HepG2 (cell line): ENCODE measurements at regions of chr10 and their contacts with region 1.

Region 1: DNA sequence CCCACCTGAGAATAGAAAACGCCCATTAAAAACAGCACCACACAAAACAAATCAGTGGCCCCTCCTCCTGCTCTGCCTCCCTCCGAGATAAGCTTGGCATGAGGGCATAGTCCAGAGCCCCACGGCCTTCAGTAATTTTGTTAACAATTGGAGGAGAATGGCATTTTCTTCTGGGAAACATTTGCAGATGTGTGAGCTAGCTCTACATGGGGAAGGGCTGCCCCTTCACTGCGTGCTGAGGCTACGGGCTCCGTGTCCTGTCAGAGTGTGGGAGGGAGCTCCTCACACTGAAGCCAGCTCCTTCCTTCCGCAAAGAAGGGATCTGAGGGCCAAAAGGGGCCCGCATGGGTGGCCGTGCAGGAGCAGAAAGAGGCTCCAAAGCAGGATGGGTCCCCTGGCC is 15.2 kb downstream of the GRK5 start:
- DNase-seq: peak; percentile 77
- ATAC-seq: peak; percentile 87
- H3K4me3 ChIP-seq: peak overlapping the region; percentile 40 to 69 (median 42); a peak in 5 of 6 replicates
- H3K27ac ChIP-seq: peak overlapping the region; percentile 60
- H3K4me1 ChIP-seq: peaks cover 50% of the 10 kb centered on the region
- H3K27me3 ChIP-seq: no peaks in the 10 kb centered on the region
- CTCF ChIP-seq: no peak
- EP300 ChIP-seq: no peak
- POLR2A ChIP-seq: no peak
- RAD21 ChIP-seq: no peak

Region 2: DNA sequence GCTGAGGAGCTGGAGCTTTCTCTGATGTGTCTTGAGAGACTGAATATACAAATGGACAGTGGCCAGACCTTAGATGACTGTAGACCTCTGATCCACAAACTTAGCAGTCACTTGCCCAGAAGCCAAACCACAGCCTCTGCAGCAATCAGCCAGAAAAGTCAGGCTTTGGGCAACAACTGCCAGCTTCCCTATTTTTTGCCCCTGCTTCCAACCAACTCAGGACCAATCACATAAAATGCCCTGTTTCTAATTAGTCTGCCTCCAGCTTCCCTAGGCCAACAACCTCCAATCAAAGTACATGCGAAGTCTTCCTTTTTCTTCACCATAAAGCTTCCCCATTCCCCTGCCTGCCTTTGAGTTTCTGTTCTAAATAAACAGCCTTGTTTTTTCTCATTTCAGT is 430.0 kb before region 1 on chr10:
- CTCF ChIA-PET with region 1: no interaction called
- POLR2A ChIA-PET with region 1: no interaction called
- in situ Hi-C with region 1: no loop called
- intact Hi-C with region 1: no loop called
- DNase-seq: no peak
- ATAC-seq: no peak
- H3K4me3 ChIP-seq: no peak overlapping the region
- H3K27ac ChIP-seq: no peak overlapping the region
- H3K4me1 ChIP-seq: no peaks in the 10 kb centered on the region
- H3K27me3 ChIP-seq: no peaks in the 10 kb centered on the region; a peak in 1 of 5 replicates
- CTCF ChIP-seq: no peak
- EP300 ChIP-seq: no peak
- POLR2A ChIP-seq: no peak
- RAD21 ChIP-seq: no peak

Region 3: DNA sequence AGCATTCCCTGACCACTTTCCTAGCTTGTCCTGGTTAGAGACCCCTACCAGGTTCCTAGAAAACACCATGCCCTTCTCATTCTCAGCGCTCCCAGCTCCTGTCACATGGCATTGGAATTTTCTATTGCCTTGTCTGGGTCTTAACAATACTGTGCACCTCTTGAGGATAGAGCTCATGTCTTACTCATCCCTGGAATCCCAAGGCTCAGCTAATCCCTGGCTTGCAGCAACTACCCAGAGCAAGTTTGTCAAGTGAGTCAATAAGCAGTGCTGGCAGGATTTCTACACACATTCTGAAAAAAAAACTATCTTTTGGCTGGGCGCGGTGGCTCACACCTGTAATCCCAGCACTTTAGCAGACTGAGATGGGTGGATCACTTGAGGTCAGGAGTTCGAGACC is 32.2 kb before region 1 on chr10:
- CTCF ChIA-PET with region 1: no interaction called
- POLR2A ChIA-PET with region 1: no interaction called
- in situ Hi-C with region 1: no loop called
- intact Hi-C with region 1: no loop called
- DNase-seq: no peak
- ATAC-seq: peak; percentile 40
- H3K4me3 ChIP-seq: no peak overlapping the region
- H3K27ac ChIP-seq: no peak overlapping the region
- H3K4me1 ChIP-seq: peaks cover 35% of the 10 kb centered on the region
- H3K27me3 ChIP-seq: no peaks in the 10 kb centered on the region
- CTCF ChIP-seq: no peak
- EP300 ChIP-seq: no peak
- POLR2A ChIP-seq: no peak
- RAD21 ChIP-seq: no peak

Region 4: GRCh38 chr10:119253433-119254174 is 31.1 kb after region 1 on chr10:
- CTCF ChIA-PET with region 1: no interaction called
- POLR2A ChIA-PET with region 1: interaction called, 43 read pairs
- in situ Hi-C with region 1: no loop called
- intact Hi-C with region 1: no loop called
- DNase-seq: peak; percentile 92
- ATAC-seq: peak; percentile 86
- H3K4me3 ChIP-seq: peak overlapping the region; percentile 39 to 70 (median 51); a peak in 5 of 6 replicates
- H3K27ac ChIP-seq: peak overlapping the region; percentile 90
- H3K4me1 ChIP-seq: peaks cover 74% of the 10 kb centered on the region
- H3K27me3 ChIP-seq: no peaks in the 10 kb centered on the region
- CTCF ChIP-seq: peak; percentile 33
- EP300 ChIP-seq: no peak; a peak in 1 of 4 replicates
- POLR2A ChIP-seq: no peak; a peak in 1 of 4 replicates
- RAD21 ChIP-seq: peak; percentile 41; the same call in 1 of the 2 replicates

Region 5: GRCh38 chr10:119281581-119282071 is 59.1 kb after region 1 on chr10:
- CTCF ChIA-PET with region 1: no interaction called
- POLR2A ChIA-PET with region 1: no interaction called
- in situ Hi-C with region 1: no loop called
- intact Hi-C with region 1: no loop called
- DNase-seq: no peak
- ATAC-seq: no peak
- H3K4me3 ChIP-seq: no peak overlapping the region
- H3K27ac ChIP-seq: no peak overlapping the region
- H3K4me1 ChIP-seq: peaks cover 18% of the 10 kb centered on the region
- H3K27me3 ChIP-seq: no peaks in the 10 kb centered on the region
- CTCF ChIP-seq: no peak
- EP300 ChIP-seq: no peak
- POLR2A ChIP-seq: no peak
- RAD21 ChIP-seq: no peak

Region 6: DNA sequence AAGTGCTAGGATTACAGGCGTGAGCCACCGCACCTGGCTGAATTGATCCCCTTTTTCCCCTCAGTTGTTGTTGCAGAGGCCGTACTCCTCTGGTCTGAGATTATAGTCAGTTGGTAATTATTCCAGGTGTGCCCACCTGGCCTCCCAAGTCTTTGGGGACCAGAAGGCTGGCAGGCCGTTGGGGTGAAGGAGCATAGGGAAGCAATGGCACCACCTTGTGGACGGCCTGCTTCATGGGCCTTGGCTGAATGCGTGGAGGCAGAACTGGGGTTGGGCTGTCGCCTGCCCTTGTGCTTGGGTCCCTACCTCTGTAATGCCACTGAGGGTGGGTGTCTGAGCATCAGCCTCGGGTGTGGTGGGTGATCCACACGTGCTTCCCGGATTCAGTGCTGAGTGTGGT is 194.3 kb after region 1 on chr10:
- CTCF ChIA-PET with region 1: no interaction called
- POLR2A ChIA-PET with region 1: no interaction called
- in situ Hi-C with region 1: no loop called
- intact Hi-C with region 1: no loop called
- DNase-seq: peak; percentile 46
- ATAC-seq: peak; percentile 80
- H3K4me3 ChIP-seq: no peak overlapping the region
- H3K27ac ChIP-seq: no peak overlapping the region
- H3K4me1 ChIP-seq: peaks cover 16% of the 10 kb centered on the region
- H3K27me3 ChIP-seq: no peaks in the 10 kb centered on the region
- CTCF ChIP-seq: peak; percentile 97
- EP300 ChIP-seq: no peak
- POLR2A ChIP-seq: no peak
- RAD21 ChIP-seq: peak; percentile 93